T-cell (primary cell): ENCODE measurements at regions of chr6 and their contacts with region 1.

Region 1: GRCh38 chr6:117585647-117586046 is 16.7 kb downstream of the GOPC start:
- DNase-seq: no peak
- ATAC-seq: no peak
- H3K4me3 ChIP-seq: no peak overlapping the region
- H3K4me3 Mint-ChIP-seq: no peak overlapping the region
- H3K27ac ChIP-seq: no peak overlapping the region
- H3K27ac Mint-ChIP-seq: no peak overlapping the region
- H3K4me1 ChIP-seq: peaks cover 0 to 8% of the 10 kb centered on the region in 2 experiments
- H3K4me1 Mint-ChIP-seq: peaks cover 49 to 56% (median 53%) of the 10 kb centered on the region in 3 donors
- H3K27me3 ChIP-seq: no peaks in the 10 kb centered on the region
- H3K27me3 Mint-ChIP-seq: no peaks in the 10 kb centered on the region

Region 2: GRCh38 chr6:117555882-117556498 is 29.7 kb before region 1 on chr6:
- CTCF ChIA-PET with region 1: interaction called in 1 of 2 experiments, 11 read pairs
- POLR2A ChIA-PET with region 1: interaction called in 1 of 2 experiments, 10 read pairs
- DNase-seq: peak in 28 of 35 experiments; percentile 8 to 76 (median 47)
- ATAC-seq: peak in 2 of 4 experiments; percentile 32
- H3K4me3 ChIP-seq: no peak overlapping the region
- H3K4me3 Mint-ChIP-seq: no peak overlapping the region
- H3K27ac ChIP-seq: no peak overlapping the region
- H3K27ac Mint-ChIP-seq: no peak overlapping the region
- H3K4me1 ChIP-seq: no peaks in the 10 kb centered on the region
- H3K4me1 Mint-ChIP-seq: peaks cover 2 to 5% (median 2%) of the 10 kb centered on the region in 3 donors
- H3K27me3 ChIP-seq: no peaks in the 10 kb centered on the region
- H3K27me3 Mint-ChIP-seq: no peaks in the 10 kb centered on the region

Region 3: DNA sequence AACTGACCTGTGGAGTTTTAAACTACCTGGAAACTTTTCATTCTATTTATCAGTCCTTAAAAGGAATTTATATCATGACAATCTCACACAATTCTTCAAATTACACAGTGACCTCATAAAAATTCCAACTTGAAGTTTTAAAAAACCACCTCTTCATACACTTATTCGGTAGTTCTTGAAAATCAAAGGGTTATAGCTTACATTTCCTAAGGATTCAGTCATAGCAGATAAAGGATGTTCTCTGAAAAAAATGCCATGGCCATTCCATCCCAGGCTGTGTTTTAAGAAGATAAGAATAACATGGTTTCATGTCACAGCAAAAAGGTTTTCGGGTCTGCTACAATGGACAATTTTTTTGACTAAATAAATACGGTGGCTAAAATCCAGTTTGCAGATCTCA is 24.5 kb before region 1 on chr6:
- CTCF ChIA-PET with region 1: interaction called in 1 of 2 experiments, 3 read pairs
- POLR2A ChIA-PET with region 1: interaction called in 1 of 2 experiments, 10 read pairs
- DNase-seq: no peak
- ATAC-seq: no peak
- H3K4me3 ChIP-seq: no peak overlapping the region
- H3K4me3 Mint-ChIP-seq: no peak overlapping the region
- H3K27ac ChIP-seq: no peak overlapping the region
- H3K27ac Mint-ChIP-seq: no peak overlapping the region
- H3K4me1 ChIP-seq: no peaks in the 10 kb centered on the region
- H3K4me1 Mint-ChIP-seq: no peaks in the 10 kb centered on the region
- H3K27me3 ChIP-seq: no peaks in the 10 kb centered on the region
- H3K27me3 Mint-ChIP-seq: no peaks in the 10 kb centered on the region

Region 4: DNA sequence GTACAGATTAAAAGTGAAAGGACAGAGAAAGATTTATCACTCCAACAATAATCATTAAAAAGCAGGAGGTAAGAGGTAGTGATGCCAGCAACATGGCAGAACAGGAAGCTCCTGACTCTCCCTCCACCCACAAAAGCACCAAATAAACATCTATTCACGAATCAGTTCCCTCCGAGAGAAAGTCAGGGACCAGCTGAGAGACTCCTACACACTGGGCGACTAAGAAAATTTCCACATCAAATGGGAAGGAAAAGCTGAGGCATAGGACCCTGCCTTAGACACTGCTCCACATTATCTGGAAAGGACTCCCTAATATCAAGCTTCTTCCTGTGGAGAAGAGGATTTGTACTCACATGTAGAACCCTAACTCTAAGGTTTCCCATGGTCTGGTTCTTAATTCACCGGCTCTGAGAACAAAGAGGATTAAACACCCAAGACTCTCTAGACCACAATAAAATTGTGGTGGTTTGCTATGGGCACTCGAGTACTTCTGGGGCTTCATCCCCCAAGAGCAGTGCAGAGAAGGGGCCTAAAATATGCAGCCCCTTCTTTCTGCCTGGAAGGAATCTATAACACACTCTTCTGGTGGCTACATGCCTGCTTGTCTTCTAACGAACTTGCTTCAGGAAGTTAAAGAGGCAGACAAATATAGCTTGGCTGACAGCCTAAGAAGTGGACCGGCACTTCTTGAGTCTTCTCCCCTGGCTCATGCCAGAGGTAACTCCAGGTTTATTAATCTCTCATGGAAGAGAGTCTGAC is 1278.9 kb after region 1 on chr6:
- CTCF ChIA-PET with region 1: no interaction called
- POLR2A ChIA-PET with region 1: interaction called in 1 of 2 experiments, 11 read pairs
- DNase-seq: no peak
- ATAC-seq: peak in 3 of 4 experiments; percentile 56 to 68 (median 61)
- H3K4me3 ChIP-seq: no peak overlapping the region
- H3K4me3 Mint-ChIP-seq: peak overlapping the region; percentile 61 to 66 (median 62)
- H3K27ac ChIP-seq: no peak overlapping the region
- H3K27ac Mint-ChIP-seq: peak overlapping the region; percentile 74 to 89
- H3K4me1 ChIP-seq: peaks cover 2 to 12% of the 10 kb centered on the region in 2 experiments
- H3K4me1 Mint-ChIP-seq: peaks cover 49 to 59% (median 59%) of the 10 kb centered on the region in 3 donors
- H3K27me3 ChIP-seq: no peaks in the 10 kb centered on the region
- H3K27me3 Mint-ChIP-seq: no peaks in the 10 kb centered on the region